Lower leg skin (tissue), 4 donors: ENCODE measurements at regions of chr19 and their contacts with region 1.

Region 1: GRCh38 chr19:16620018-16620417 is 8.0 kb downstream of the MED26 start:
- DNase-seq: no peak
- H3K4me3 ChIP-seq: no peak overlapping the region
- CTCF ChIP-seq: no peak
- POLR2A ChIP-seq: no peak

Region 2: GRCh38 chr19:15456871-15457700 is 1162.9 kb before region 1 on chr19:
- intact Hi-C with region 1: loop called (anchors 5 kb)
- DNase-seq: peak in 1 of 2 donors; percentile 31
- H3K4me3 ChIP-seq: no peak overlapping the region
- CTCF ChIP-seq: no peak
- POLR2A ChIP-seq: no peak

Region 3: GRCh38 chr19:16548956-16549355 is 71.1 kb before region 1 on chr19:
- intact Hi-C with region 1: loop called (anchors 2 kb)
- DNase-seq: no peak
- H3K4me3 ChIP-seq: no peak overlapping the region
- CTCF ChIP-seq: no peak
- POLR2A ChIP-seq: no peak